CD4-positive, alpha-beta memory T cell (primary cell): ENCODE measurements at regions of chr13 and their contacts with region 1.

Region 1: DNA sequence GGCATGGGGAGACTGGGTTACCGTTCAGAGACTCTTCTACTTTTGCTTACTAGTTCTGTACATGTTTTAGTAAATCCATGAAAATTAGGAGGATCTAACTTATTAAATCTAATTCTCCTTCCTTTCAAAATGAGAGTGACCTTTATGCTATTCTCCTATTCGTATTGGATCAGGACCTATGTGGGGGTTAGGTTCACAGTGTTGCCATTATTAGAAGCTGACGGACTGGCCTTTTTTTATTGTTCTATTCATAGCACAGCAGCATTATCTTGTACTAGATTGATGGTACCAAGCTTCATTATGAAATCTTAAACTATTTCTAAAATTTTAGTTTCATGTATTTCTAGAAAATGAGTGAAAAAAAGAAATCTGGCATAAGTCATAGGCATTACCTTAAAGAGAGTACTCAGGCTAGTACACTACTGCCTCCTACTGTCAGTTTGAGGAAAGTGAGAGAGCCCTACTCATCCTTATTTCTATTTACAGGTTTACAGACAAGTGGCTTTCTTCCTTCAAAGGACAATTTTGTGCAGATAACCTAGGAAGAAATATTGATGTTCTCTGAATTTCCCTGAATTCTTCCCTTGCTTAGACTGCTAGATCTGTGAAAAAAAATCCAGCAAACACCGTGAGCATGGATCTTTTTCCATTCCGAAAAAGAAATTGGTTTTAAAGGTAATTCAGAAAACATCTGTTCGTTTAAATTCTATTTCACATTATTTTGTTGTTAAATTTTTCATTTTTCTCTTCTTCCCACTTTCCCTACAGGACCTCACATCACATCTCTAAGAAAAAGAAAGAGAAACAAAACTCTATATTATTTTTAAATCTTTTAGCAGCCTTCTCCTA is 485.5 kb downstream of the DIAPH3 start:
- DNase-seq: peak in 4 of 5 donors; percentile 23 to 38 (median 34)
- H3K4me3 ChIP-seq: no peak overlapping the region
- H3K4me3 Mint-ChIP-seq: no peak overlapping the region
- H3K27ac ChIP-seq: no peak overlapping the region
- H3K27ac Mint-ChIP-seq: no peak overlapping the region
- H3K4me1 ChIP-seq: peaks cover 6% of the 10 kb centered on the region
- H3K4me1 Mint-ChIP-seq: peaks cover 0 to 6% (median under 1%) of the 10 kb centered on the region in 4 donors
- H3K27me3 ChIP-seq: no peaks in the 10 kb centered on the region
- H3K27me3 Mint-ChIP-seq: no peaks in the 10 kb centered on the region

Region 2: GRCh38 chr13:60335531-60335930 is 657.3 kb after region 1 on chr13:
- CTCF ChIA-PET with region 1: interaction called, 4 read pairs
- POLR2A ChIA-PET with region 1: no interaction called
- intact Hi-C with region 1: loop called (anchors 1 kb)
- DNase-seq: peak in 1 of 5 donors; percentile 6
- H3K4me3 ChIP-seq: no peak overlapping the region
- H3K4me3 Mint-ChIP-seq: no peak overlapping the region
- H3K27ac ChIP-seq: no peak overlapping the region
- H3K27ac Mint-ChIP-seq: no peak overlapping the region
- H3K4me1 ChIP-seq: no peaks in the 10 kb centered on the region
- H3K4me1 Mint-ChIP-seq: no peaks in the 10 kb centered on the region
- H3K27me3 ChIP-seq: no peaks in the 10 kb centered on the region
- H3K27me3 Mint-ChIP-seq: peaks cover 0 to 1% of the 10 kb centered on the region in 2 donors

Region 3: DNA sequence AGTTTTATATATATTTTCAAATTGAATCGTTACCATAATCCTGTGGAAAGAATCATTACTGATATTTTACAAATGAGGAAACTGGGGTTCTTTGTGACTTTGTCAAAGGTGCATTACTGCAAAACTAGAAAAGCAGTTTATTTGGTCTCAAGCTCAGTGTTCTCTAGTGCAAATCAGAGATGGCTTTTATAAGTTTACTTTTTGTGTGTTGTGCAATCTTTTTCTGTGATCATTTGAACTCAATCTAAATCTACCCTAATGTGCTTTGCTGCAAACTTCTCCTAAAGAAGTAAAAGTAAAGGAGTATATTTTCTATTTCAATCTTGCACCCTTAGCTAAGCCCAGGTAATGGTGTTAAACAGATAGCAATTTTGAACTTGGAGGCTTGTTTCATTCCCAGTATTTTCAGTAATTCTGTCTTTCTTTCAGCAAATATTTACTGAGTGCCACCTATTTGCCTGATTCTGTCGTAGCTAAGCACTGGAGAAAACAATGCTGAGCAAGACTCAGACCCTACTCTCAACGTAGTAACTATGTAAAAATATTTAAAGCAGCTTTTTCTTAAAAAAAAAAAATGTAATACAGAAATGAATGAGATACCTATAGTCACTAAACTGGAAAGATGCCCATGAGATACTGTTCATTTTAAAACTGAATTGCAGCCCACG is 842.8 kb after region 1 on chr13:
- CTCF ChIA-PET with region 1: no interaction called
- POLR2A ChIA-PET with region 1: no interaction called
- intact Hi-C with region 1: loop called (anchors 5 kb)
- DNase-seq: no peak
- H3K4me3 ChIP-seq: no peak overlapping the region
- H3K4me3 Mint-ChIP-seq: no peak overlapping the region
- H3K27ac ChIP-seq: no peak overlapping the region
- H3K27ac Mint-ChIP-seq: no peak overlapping the region
- H3K4me1 ChIP-seq: no peaks in the 10 kb centered on the region
- H3K4me1 Mint-ChIP-seq: no peaks in the 10 kb centered on the region
- H3K27me3 ChIP-seq: no peaks in the 10 kb centered on the region
- H3K27me3 Mint-ChIP-seq: no peaks in the 10 kb centered on the region